Esophagus squamous epithelium (tissue), 5 donors: ENCODE measurements at regions of chr1 and their contacts with region 1.

Region 1: GRCh38 chr1:240341379-240342250 is 249.9 kb downstream of the FMN2 start:
- DNase-seq: no peak
- H3K4me3 ChIP-seq: no peak overlapping the region
- H3K27ac ChIP-seq: no peak overlapping the region
- H3K4me1 ChIP-seq: no peaks in the 10 kb centered on the region
- H3K27me3 ChIP-seq: no peaks in the 10 kb centered on the region
- CTCF ChIP-seq: no peak
- POLR2A ChIP-seq: no peak

Region 2: GRCh38 chr1:240210026-240210425 is 131.6 kb before region 1 on chr1:
- intact Hi-C with region 1: no loop called
- DNase-seq: no peak
- H3K4me3 ChIP-seq: no peak overlapping the region
- H3K27ac ChIP-seq: no peak overlapping the region
- H3K4me1 ChIP-seq: no peaks in the 10 kb centered on the region
- H3K27me3 ChIP-seq: no peaks in the 10 kb centered on the region
- CTCF ChIP-seq: no peak
- POLR2A ChIP-seq: no peak

Region 3: DNA sequence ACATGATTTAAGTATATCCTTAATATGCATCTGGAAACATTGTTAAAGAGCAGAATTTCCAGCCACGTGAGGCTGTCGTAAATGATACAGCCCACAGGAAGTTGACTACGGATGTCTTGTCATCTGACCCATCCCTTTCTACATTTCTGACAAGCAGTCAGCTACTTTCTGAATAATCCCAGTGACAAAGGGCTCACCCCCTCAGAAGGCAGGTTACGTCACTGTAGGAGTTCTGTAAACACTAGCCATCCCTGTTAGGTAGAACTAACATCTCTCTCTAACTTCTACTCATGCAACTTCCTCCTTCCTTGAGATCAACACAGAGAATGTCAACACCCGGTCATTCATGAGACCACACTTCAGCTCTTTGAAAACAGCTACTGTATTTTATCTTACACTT is 11.2 kb after region 1 on chr1:
- intact Hi-C with region 1: loop called (anchors 1 kb)
- DNase-seq: no peak
- H3K4me3 ChIP-seq: no peak overlapping the region
- H3K27ac ChIP-seq: no peak overlapping the region
- H3K4me1 ChIP-seq: no peaks in the 10 kb centered on the region
- H3K27me3 ChIP-seq: no peaks in the 10 kb centered on the region
- CTCF ChIP-seq: no peak
- POLR2A ChIP-seq: no peak

Region 4: GRCh38 chr1:240498992-240499391 is 157.4 kb after region 1 on chr1:
- intact Hi-C with region 1: no loop called
- DNase-seq: no peak
- H3K4me3 ChIP-seq: no peak overlapping the region
- H3K27ac ChIP-seq: no peak overlapping the region
- H3K4me1 ChIP-seq: no peaks in the 10 kb centered on the region
- H3K27me3 ChIP-seq: no peaks in the 10 kb centered on the region
- CTCF ChIP-seq: no peak
- POLR2A ChIP-seq: no peak